Heart right ventricle (tissue), 16 donors: ENCODE measurements at regions of chr6 and their contacts with region 1.

Region 1: DNA sequence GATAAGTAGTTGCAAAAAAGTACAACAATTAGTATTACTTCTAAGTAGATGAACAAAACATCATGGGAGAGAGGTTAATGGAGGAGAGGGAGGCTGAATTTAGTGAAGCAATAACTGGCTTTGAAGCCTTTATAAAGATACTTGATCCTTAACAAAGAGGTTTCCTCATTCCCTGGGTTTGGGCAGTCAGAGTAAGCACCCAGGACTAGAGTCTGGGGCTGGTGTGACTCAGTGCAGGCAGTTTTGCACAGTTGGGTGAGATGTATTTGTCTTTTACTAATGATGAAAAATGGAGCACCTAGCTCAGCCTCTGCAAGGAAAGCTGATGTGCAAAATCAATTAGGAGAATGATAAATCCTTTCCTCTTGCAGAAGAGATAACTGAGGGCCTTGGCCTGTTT is 11.8 kb upstream of the OPN5 start:
- DNase-seq: no peak
- ATAC-seq: no peak
- H3K4me3 ChIP-seq: no peak overlapping the region
- H3K27ac ChIP-seq: no peak overlapping the region
- H3K4me1 ChIP-seq: no peaks in the 10 kb centered on the region
- H3K27me3 ChIP-seq: no peaks in the 10 kb centered on the region
- CTCF ChIP-seq: no peak

Region 2: GRCh38 chr6:47810885-47811284 is 40.9 kb after region 1 on chr6:
- intact Hi-C with region 1: loop called in 1 of 10 experiments (anchors 1 kb)
- DNase-seq: no peak
- ATAC-seq: no peak
- H3K4me3 ChIP-seq: no peak overlapping the region
- H3K27ac ChIP-seq: no peak overlapping the region
- H3K4me1 ChIP-seq: no peaks in the 10 kb centered on the region
- H3K27me3 ChIP-seq: peaks cover 0 to 9% (median 0%) of the 10 kb centered on the region in 7 donors
- CTCF ChIP-seq: no peak